ENCODE measurements at regions of chr6 and their contacts with region 1.

Region 1: DNA sequence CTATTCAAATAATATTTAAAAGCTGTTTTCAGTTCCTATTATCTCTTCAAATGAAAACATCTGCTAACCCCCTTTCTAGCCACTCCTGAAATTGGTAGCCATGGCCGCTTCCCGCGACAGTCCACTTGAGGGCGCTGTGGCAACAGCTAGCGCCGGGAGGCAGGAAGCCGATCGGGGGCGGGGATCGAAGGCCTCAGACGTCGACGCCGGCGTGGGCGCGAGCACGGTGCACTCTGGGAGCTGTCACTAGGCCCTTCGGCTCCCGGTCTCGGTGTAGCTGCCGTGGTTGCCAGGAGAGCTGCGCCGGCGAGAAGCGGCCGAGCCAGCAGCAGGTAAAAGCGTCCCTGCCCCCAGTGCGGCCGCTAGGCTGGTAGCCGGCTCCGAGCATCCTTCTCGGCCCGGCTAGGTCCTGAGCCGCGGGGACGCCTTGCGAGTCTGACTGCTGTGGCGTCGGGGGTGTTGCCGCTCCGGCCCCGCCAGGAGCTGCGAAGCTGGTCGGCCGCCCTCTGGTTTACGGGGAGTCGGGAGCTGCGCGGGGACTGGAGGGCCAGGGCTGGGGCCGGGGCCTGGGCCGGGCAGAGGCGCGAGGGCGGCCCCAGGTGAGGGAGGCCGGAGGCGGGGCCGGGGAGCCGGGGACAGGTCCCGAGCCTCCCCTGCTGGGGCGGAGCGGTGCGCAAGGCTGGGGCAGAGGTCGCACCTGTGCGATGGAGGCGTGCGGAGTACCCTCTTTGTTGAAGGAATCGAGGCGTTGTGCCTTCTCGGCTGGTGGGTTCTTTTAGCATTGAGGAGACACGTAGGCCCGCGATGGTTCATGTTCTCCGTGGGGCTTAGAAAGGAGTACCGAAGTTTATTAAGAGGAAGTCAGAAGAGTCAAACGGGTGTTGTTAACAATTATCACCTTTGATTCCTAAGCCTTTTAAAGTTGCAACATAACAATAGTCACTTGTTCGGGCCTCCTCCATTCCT is at the start of gene DOP1A:
- DNase-seq: peak; percentile 81
- H3K4me3 ChIP-seq: peak within 1 kb of the TSS; percentile 85
- H3K27ac ChIP-seq: no peak within 1 kb of the TSS
- H3K27me3 ChIP-seq: no peaks in the 10 kb centered on the region
- CTCF ChIP-seq: peak; percentile 99
- polyA plus RNA-seq, gene DOP1A: 11.3 and 14.6 TPM in 2 replicates

Region 2: DNA sequence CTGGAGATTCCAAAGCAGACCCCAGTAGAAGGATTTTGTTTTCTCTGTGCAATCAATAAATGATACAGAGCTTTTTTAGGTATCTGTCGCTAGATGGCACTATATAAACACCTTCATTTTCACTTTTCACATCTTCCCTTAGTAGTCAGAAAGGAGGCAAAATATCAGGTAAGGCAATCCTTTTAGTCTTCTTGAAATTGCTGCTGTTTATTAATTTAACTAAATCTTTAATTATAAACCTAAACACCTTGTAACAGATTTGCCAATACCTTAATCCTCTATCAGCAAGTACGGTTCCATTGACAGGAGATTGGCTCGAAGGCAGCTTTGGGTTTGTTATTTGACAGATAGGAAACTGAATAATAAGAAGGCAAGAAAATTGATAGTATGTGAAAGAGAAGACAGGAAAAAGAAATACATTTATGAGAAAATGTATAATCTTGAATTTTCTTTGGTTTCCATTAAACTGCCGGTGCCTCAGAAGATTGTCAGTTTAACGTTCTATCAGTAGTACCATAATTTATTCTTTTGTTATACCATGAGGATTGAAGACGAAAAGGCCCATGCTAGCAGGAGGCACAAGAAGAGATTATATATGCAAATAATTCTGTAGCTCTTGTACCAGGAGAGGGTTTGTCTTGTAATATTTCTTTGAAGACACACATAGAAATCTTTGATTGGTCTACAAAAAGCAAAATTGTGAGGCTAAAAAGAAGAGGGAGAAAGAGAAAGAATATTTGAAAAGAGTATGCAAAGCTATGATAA is 796.7 kb before region 1 on chr6:
- CTCF ChIA-PET with region 1: interaction called, 54 read pairs
- POLR2A ChIA-PET with region 1: no interaction called
- DNase-seq: no peak
- H3K4me3 ChIP-seq: no peak overlapping the region
- H3K27ac ChIP-seq: no peak overlapping the region
- H3K27me3 ChIP-seq: no peaks in the 10 kb centered on the region
- CTCF ChIP-seq: peak; percentile 61

Region 3: DNA sequence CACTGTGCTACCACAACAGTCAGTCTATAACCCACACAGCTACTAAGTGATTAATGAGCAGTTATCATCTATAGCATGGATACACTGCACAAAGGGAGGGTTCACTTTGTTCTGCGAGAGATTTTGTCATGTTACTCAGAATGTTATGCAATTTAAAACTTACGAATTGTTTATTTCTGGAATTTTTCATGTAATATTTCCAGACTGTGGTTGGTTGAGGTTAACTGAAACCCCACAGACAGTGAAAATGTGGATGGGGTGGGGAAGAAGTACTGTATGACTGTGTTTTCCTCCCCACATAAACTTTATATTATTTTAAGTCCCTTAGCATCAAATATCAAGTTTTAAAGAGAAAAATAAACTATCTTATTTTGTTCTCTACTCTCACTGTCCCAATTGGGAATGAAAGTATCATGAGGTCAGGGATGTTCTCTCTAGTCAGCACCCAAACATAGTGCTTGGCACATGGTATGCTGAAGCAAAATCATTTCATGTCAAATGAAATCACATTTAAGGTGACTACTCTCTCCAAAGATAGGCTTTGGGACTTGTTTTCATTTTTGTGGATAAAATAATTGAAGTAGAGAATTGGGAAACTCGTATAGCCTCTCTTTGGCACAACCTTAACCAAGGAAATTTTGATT is 25.1 kb after region 1 on chr6:
- CTCF ChIA-PET with region 1: interaction called, 44 read pairs
- POLR2A ChIA-PET with region 1: no interaction called
- DNase-seq: no peak
- H3K4me3 ChIP-seq: no peak overlapping the region
- H3K27ac ChIP-seq: no peak overlapping the region
- H3K27me3 ChIP-seq: no peaks in the 10 kb centered on the region
- CTCF ChIP-seq: no peak

Region 4: DNA sequence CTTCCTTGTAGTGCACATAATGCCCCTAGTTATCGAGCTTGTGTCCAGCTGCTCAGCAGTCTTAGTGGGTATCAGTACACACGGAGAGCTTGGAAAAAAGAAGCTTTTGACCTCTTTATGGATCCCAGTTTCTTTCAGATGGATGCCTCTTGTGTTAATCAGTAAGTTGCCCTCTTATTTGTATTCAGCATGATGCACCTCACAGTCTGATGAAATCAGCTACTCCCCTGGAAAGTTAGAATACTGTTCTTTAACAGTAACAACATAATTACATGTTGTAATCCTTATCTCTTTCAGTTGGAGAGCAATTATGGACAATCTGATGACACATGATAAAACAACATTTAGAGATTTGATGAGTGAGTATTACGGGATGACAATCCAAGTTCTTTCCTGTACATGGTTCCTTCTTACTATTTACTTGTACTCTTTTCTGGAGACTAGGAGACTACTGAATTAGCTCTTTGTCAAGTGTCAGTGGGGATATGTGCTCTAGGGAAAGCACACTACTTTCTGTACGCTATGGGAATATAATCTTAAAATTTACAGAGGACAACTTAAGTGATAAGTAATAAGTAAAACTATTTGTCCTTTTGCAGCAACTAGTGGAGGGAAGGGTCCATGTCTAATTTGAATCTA is 86.3 kb after region 1 on chr6:
- CTCF ChIA-PET with region 1: interaction called, 39 read pairs
- POLR2A ChIA-PET with region 1: no interaction called
- DNase-seq: no peak
- H3K4me3 ChIP-seq: no peak overlapping the region
- H3K27ac ChIP-seq: no peak overlapping the region
- H3K27me3 ChIP-seq: no peaks in the 10 kb centered on the region
- CTCF ChIP-seq: no peak

Region 5: GRCh38 chr6:83199863-83200225 is 132.1 kb after region 1 on chr6:
- CTCF ChIA-PET with region 1: interaction called, 65 read pairs
- POLR2A ChIA-PET with region 1: no interaction called
- DNase-seq: peak; percentile 47
- H3K4me3 ChIP-seq: no peak overlapping the region
- H3K27ac ChIP-seq: no peak overlapping the region
- H3K27me3 ChIP-seq: no peaks in the 10 kb centered on the region
- CTCF ChIP-seq: no peak

Region 6: GRCh38 chr6:83413068-83413467 is 345.3 kb after region 1 on chr6:
- CTCF ChIA-PET with region 1: interaction called, 28 read pairs
- POLR2A ChIA-PET with region 1: no interaction called
- DNase-seq: no peak
- H3K4me3 ChIP-seq: no peak overlapping the region
- H3K27ac ChIP-seq: no peak overlapping the region
- H3K27me3 ChIP-seq: no peaks in the 10 kb centered on the region
- CTCF ChIP-seq: no peak